ENCODE measurements at regions of chr11 and their contacts with region 1.

Region 1: GRCh38 chr11:118956094-118956846 is at the start of gene UPK2:
- DNase-seq: peak; percentile 90 to 94 (median 92)
- ATAC-seq: peak; percentile 98
- H3K4me3 ChIP-seq: no peak within 1 kb of the TSS
- H3K27ac ChIP-seq: no peak within 1 kb of the TSS
- H3K4me1 ChIP-seq: no peaks in the 10 kb centered on the region
- H3K27me3 ChIP-seq: no peaks in the 10 kb centered on the region
- CTCF ChIP-seq: peak; percentile 86 to 99 (median 98)
- POLR2A ChIP-seq: no peak
- total RNA-seq, gene UPK2: not detected

Region 2: DNA sequence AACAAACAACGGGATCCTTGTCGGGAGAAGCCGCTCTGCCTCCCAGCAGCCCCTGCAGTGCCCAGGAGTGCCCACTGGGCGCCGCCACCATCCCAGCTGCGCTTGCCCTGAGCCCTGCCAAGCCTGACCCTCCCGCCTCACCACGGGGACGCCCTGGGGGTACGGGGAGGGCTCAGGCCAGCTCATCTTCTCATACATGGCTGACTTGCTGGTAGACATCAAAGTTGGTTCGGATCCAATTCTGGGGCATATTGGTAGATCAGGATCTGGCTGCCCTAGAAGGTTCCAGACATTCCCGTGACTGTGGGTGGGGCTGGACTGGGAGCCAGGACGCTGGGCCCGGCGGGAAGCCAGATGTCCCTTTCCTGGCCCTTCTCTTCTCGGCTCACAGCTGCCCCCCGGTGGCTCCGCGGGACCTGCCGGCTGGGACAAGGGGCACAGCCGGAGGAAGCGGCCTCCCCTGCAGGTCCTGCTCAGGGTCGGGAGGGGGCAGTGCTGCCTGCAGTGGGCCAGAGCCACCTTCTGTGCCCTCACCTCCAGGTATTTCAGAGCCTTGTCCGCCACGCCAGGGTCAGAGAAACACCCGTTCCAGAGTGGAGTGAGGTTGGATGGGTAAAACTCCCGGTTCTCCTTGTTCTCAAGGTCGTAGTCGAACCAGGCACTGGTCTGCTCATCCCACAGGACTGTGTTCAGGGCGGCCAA is 266.3 kb before region 1 on chr11:
- intact Hi-C with region 1: loop called (anchors 5 kb)
- DNase-seq: peak; percentile 89 to 96 (median 93)
- ATAC-seq: peak; percentile 92
- H3K4me3 ChIP-seq: no peak overlapping the region
- H3K27ac ChIP-seq: peak overlapping the region; percentile 58 to 84 (median 76)
- H3K4me1 ChIP-seq: peaks cover 16% of the 10 kb centered on the region
- H3K27me3 ChIP-seq: no peaks in the 10 kb centered on the region
- CTCF ChIP-seq: peak; percentile 74 to 98 (median 88)
- POLR2A ChIP-seq: peak in 1 of 3 donors; percentile 33

Region 3: GRCh38 chr11:118907051-118908042 is 48.9 kb before region 1 on chr11:
- intact Hi-C with region 1: loop called (anchors 2 kb)
- DNase-seq: peak; percentile 89 to 92 (median 90)
- ATAC-seq: peak; percentile 73
- H3K4me3 ChIP-seq: no peak overlapping the region
- H3K27ac ChIP-seq: peak overlapping the region; percentile 15 to 54 (median 32)
- H3K4me1 ChIP-seq: peaks cover 56% of the 10 kb centered on the region
- H3K27me3 ChIP-seq: no peaks in the 10 kb centered on the region
- CTCF ChIP-seq: peak; percentile 82 to 98 (median 96)
- POLR2A ChIP-seq: no peak